Calu3 (cell line): ENCODE measurements at regions of chr15 and their contacts with region 1.

Region 1: GRCh38 chr15:80173022-80173759 is 20.4 kb downstream of the FAH start:
- DNase-seq: peak; percentile 87
- H3K4me3 Mint-ChIP-seq: no peak overlapping the region
- H3K27ac Mint-ChIP-seq: no peak overlapping the region
- H3K4me1 Mint-ChIP-seq: no peaks in the 10 kb centered on the region
- H3K27me3 Mint-ChIP-seq: no peaks in the 10 kb centered on the region
- CTCF ChIP-seq: peak; percentile 92

Region 2: DNA sequence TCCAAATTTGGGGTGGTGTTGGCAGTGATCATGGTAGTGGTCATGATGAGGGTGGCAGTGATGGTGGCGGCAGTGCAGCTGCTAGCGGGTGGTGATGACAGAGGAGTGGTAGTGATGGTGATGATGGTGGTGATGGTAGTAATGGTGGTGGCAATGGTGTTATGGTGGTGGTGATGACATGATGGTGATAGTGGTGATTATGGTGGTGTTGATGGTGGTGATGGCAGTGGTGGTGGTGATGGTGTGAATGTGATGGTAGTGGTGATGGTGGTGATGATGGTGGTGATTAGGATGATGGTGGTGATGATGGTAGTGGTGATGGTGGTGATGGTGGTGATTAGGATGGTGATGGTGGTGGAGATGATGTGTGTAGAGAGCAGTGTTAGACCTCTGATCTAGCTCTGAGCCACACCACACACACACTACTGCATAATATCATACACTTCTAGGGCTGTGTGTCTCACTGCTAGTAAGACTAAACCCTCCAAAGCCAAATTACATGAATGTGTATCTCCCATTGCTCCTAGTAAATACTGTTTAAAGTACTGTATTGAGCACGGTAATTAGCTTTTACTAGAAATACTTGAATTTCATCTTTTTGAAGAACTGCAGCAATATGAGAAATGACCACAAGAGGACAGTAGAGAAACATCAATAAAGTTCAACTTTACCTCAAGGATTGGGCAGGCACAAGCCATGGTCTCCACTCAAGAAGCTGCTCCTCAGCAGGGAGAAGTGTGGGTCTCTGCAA is 833.5 kb before region 1 on chr15:
- CTCF ChIA-PET with region 1: interaction called, 4 read pairs
- intact Hi-C with region 1: loop called (anchors 10 kb)
- DNase-seq: no peak
- H3K4me3 Mint-ChIP-seq: no peak overlapping the region
- H3K27ac Mint-ChIP-seq: no peak overlapping the region
- H3K4me1 Mint-ChIP-seq: peaks cover 13% of the 10 kb centered on the region
- H3K27me3 Mint-ChIP-seq: no peaks in the 10 kb centered on the region
- CTCF ChIP-seq: peak; percentile 78

Region 3: DNA sequence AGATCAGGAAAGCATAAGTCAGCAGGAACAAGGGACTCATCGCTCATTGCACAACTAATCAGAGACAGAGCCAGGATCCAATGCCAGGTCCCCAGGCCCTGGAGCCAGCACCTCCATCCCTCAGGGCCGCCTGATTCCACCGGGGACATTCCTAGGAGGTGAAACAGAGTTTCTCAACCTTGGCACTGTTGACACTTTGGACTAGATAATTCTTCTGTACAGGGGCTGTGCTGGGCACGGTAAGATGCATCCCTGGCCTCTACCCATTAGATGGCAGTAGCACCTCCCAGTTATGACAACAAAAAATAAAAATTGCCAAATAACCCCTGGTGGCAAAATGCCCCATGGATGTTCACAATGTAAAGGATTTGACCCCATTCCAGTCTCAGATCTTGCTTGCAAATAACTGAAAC is 404.1 kb before region 1 on chr15:
- CTCF ChIA-PET with region 1: no interaction called
- intact Hi-C with region 1: loop called (anchors 1 kb)
- DNase-seq: peak; percentile 23
- H3K4me3 Mint-ChIP-seq: no peak overlapping the region
- H3K27ac Mint-ChIP-seq: no peak overlapping the region
- H3K4me1 Mint-ChIP-seq: no peaks in the 10 kb centered on the region
- H3K27me3 Mint-ChIP-seq: peaks cover 50% of the 10 kb centered on the region
- CTCF ChIP-seq: peak; percentile 52

Region 4: GRCh38 chr15:79896637-79897379 is 276.4 kb before region 1 on chr15 and contains the start of gene MTHFS:
- CTCF ChIA-PET with region 1: interaction called, 5 read pairs
- intact Hi-C with region 1: loop called (anchors 10 kb)
- DNase-seq: peak; percentile 89
- H3K4me3 Mint-ChIP-seq: peak within 1 kb of the TSS; percentile 98
- H3K27ac Mint-ChIP-seq: peak within 1 kb of the TSS; percentile 99
- H3K4me1 Mint-ChIP-seq: peaks cover 23% of the 10 kb centered on the region
- H3K27me3 Mint-ChIP-seq: no peaks in the 10 kb centered on the region
- CTCF ChIP-seq: peak; percentile 57
- total RNA-seq, gene MTHFS: 66.7 and 68.0 TPM in 2 replicates